Endothelial cell of umbilical vein (primary cell): ENCODE measurements at regions of chr11 and their contacts with region 1.

Region 1: GRCh38 chr11:8263769-8264410 is at the start of gene LMO1:
- DNase-seq: peak; percentile 69
- H3K4me3 ChIP-seq: peak within 1 kb of the TSS in 1 of 3 experiments; percentile 11
- H3K27ac ChIP-seq: no peak within 1 kb of the TSS
- H3K4me1 ChIP-seq: peaks cover 4% of the 10 kb centered on the region
- H3K27me3 ChIP-seq: peaks cover 52 to 53% of the 10 kb centered on the region in 2 experiments
- CTCF ChIP-seq: peak; percentile 88 to 92
- POLR2A ChIP-seq: no peak
- total RNA-seq, gene LMO1: not detected in 2 replicates

Region 2: DNA sequence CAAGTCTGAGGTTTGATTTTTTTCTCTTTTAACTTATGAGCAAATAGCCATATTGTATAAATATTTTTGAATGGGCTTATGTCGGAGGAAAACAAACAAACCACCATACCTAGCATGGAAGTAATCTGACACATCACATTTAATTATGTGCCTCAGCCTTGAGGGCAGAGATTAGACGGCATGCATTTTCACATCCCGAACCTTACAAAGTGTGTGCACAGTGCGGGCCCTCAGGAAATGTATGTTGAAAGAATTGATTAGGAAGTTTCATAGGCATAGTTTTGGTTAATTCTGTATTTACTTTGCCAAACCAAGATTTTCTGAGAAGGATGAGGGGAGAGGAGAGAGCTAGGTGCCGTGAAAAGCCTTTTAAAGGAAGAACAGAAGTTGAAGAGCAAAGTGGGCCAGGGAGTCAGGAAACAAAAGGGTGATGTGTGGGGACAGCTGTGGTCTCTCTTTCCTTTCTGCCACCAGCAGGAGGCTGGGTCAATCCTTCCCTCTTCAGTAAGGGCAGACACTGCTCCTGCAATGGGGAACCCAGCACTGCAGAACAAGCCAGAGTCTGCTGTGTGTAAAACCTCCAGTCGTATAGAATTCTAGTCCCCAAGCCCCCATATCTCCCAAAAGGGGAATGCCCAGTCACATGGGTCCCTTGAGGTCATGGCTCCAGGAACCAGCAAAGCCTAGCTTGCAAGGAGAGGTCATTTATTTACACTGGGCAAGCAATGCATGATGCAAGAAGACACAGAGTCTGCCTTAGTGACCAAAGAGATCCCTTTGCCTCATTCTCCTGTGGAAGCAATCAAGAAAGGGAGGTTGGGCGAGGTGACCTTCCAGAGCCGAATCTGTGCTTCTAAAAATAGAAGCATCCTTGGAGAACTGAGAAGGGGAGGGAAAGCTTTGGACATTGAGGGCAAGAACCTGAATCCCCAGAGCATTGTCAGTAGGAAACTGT is 849.7 kb before region 1 on chr11:
- CTCF ChIA-PET with region 1: no interaction called
- POLR2A ChIA-PET with region 1: no interaction called
- dilution Hi-C with region 1: no loop called
- intact Hi-C with region 1: no loop called
- DNase-seq: no peak
- H3K4me3 ChIP-seq: no peak overlapping the region
- H3K27ac ChIP-seq: no peak overlapping the region
- H3K4me1 ChIP-seq: peaks cover 7% of the 10 kb centered on the region
- H3K27me3 ChIP-seq: no peaks in the 10 kb centered on the region
- CTCF ChIP-seq: no peak
- POLR2A ChIP-seq: no peak

Region 3: GRCh38 chr11:8006349-8006977 is 257.4 kb before region 1 on chr11:
- CTCF ChIA-PET with region 1: interaction called, 22 read pairs
- POLR2A ChIA-PET with region 1: no interaction called
- dilution Hi-C with region 1: no loop called
- intact Hi-C with region 1: loop called (anchors 1 kb)
- DNase-seq: peak; percentile 61
- H3K4me3 ChIP-seq: no peak overlapping the region
- H3K27ac ChIP-seq: no peak overlapping the region
- H3K4me1 ChIP-seq: no peaks in the 10 kb centered on the region
- H3K27me3 ChIP-seq: peaks cover 0 to 2% of the 10 kb centered on the region in 2 experiments
- CTCF ChIP-seq: peak; percentile 83
- POLR2A ChIP-seq: no peak

Region 4: GRCh38 chr11:8209208-8209807 is 54.6 kb before region 1 on chr11:
- CTCF ChIA-PET with region 1: interaction called, 5 read pairs
- POLR2A ChIA-PET with region 1: no interaction called
- dilution Hi-C with region 1: no loop called
- intact Hi-C with region 1: loop called (anchors 5 kb)
- DNase-seq: no peak
- H3K4me3 ChIP-seq: no peak overlapping the region
- H3K27ac ChIP-seq: no peak overlapping the region
- H3K4me1 ChIP-seq: peaks cover 12% of the 10 kb centered on the region
- H3K27me3 ChIP-seq: peaks cover 3 to 6% of the 10 kb centered on the region in 2 experiments
- CTCF ChIP-seq: peak; percentile 43 to 55
- POLR2A ChIP-seq: no peak

Region 5: DNA sequence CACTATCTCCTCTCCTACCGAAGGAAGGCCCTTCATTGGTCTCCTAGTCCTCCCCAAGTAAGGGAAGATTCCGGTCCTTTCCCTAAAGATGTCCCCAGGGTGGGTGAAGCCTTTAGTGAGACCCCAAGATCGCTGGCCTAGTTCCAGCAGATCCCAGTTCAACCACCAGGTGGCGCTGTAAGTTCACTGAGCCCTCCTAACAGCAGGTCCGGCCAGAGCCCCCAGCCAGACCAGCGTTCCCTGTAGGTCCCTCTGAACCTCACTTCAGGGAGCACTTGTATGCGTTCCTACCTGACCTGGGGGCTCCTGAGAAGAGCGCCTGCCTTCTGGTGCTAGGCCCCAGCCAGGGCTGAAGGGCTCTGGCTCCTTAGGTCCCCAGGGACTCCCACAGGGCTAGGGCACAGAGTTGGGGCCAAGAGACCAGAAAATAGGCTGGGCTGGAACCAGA is 38.3 kb before region 1 on chr11:
- CTCF ChIA-PET with region 1: interaction called, 49 read pairs
- POLR2A ChIA-PET with region 1: no interaction called
- dilution Hi-C with region 1: no loop called
- intact Hi-C with region 1: loop called (anchors 1 kb)
- DNase-seq: peak; percentile 68
- H3K4me3 ChIP-seq: no peak overlapping the region
- H3K27ac ChIP-seq: no peak overlapping the region
- H3K4me1 ChIP-seq: no peaks in the 10 kb centered on the region
- H3K27me3 ChIP-seq: peaks cover 0 to 3% of the 10 kb centered on the region in 2 experiments
- CTCF ChIP-seq: peak; percentile 84 to 90
- POLR2A ChIP-seq: no peak

Region 6: DNA sequence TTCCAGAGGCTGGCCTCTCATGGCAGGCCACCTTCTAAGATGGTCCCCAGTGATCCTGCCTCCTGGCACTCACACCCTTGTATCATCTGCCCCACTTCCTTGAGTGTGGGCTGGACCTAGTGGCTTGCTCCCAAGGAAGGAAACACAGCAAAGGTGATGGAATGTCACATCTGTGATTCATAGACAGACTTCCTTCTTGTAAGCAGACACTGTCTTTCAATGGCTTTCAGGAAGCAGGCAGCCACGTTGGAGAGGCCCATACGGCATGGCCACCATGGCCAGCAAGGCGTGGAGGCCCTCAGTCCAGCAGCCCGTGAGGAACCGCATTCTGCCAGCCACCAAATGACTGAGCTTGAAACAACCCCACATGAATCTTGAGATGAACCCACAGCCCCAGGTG is 11.5 kb before region 1 on chr11:
- CTCF ChIA-PET with region 1: interaction called, 46 read pairs
- POLR2A ChIA-PET with region 1: no interaction called
- dilution Hi-C with region 1: no loop called
- intact Hi-C with region 1: loop called (anchors 1 kb)
- DNase-seq: no peak
- H3K4me3 ChIP-seq: no peak overlapping the region
- H3K27ac ChIP-seq: no peak overlapping the region
- H3K4me1 ChIP-seq: peaks cover 6% of the 10 kb centered on the region
- H3K27me3 ChIP-seq: no peaks in the 10 kb centered on the region
- CTCF ChIP-seq: no peak
- POLR2A ChIP-seq: no peak

Region 7: DNA sequence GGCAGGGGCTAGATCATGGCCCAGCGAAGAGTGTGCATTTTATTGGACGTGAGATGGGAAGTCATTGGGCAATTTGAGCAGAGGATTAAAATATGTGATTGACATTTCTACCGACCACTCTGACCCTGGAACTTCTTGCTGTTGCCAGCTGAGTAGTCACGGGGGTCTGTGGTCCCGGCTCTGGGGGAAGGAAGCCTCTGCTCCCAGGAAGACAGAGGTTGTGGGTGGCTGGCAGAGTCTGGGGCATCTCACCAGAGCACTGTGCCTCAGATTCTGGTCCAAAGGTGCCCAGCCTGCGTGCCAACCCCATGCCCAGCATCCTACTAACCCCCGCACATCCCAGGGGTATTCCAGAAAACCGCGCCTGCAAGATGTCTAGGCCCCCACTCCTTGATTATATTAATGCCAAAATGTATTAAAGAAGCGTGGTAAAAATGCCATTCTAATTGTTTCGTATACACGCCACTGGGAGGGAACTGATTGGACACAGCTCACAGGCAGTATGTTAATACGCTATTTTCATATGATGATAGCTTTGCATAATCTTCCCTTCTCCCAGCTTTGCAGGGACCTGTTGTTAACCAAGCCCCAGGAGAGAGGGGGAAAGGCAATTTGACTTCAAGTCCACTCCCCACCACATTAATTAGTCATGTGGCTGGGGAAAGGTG is 25.1 kb after region 1 on chr11:
- CTCF ChIA-PET with region 1: interaction called, 10 read pairs
- POLR2A ChIA-PET with region 1: no interaction called
- dilution Hi-C with region 1: no loop called
- intact Hi-C with region 1: no loop called
- DNase-seq: no peak
- H3K4me3 ChIP-seq: no peak overlapping the region
- H3K27ac ChIP-seq: no peak overlapping the region
- H3K4me1 ChIP-seq: no peaks in the 10 kb centered on the region
- H3K27me3 ChIP-seq: peaks cover 5 to 7% of the 10 kb centered on the region in 2 experiments
- CTCF ChIP-seq: no peak
- POLR2A ChIP-seq: no peak